Dendritic cell treated with granulocyte-macrophage colony-stimulating factor and Interleukin-4, amounts not matched to agents 40 ng/mL and 50 ng/mL, for 4 days (primary cell): ENCODE measurements at regions of chr20 and their contacts with region 1.

Region 1: GRCh38 chr20:32535953-32536823 is 48.9 kb downstream of the NOL4L start:
- H3K4me3 Mint-ChIP-seq: peak overlapping the region; percentile 76
- H3K27ac Mint-ChIP-seq: peak overlapping the region; percentile 75
- H3K4me1 Mint-ChIP-seq: peaks cover 64% of the 10 kb centered on the region
- H3K27me3 Mint-ChIP-seq: peaks cover 14% of the 10 kb centered on the region

Region 2: DNA sequence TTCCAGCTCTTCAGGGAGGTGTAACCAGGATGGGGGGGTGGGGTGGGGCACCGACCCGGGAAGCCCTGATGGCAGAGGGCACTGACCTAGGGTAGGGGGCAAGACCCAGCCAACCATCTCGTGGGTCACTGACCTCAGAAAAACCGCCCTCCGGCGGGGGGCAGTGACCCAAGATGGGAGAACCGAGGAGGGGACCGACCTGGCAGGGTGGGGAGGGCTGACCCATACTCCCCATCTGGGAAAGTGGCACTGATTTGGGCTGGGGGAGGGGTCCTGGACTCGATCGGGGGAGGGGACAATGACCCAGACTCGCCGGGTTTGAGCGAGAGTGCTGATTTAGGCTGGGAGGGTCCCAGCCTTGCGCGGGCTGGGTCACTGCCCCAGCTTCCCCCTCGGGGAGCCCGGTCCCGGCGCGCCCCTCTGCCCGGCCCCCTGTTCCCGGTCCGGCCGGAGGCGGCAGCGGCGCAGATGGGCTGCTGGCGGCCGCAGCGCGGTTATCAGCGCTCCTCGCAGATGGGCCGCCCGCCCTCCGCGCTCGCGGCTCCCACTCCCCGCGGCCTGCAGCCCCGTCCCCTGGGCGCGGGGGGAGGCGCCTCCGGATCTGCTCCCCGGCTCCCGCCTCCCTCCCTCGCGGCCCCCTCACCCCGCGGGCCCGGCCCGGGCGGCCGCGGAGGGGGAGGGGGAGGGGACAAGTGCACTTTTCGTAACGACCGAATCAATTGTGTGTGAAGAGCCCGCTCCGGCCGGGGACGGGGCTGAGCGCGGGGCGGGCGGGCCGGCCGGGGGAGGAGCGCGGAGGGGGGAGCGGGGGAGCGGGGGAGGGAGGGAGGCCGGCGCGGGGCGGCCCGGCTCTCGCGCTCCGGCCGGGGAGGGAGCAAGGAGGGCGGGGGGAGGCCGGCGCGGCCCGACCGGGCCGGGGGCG is 46.7 kb after region 1 on chr20:
- intact Hi-C with region 1: loop called (anchors 5 kb)
- H3K4me3 Mint-ChIP-seq: peak overlapping the region; percentile 64
- H3K27ac Mint-ChIP-seq: peak overlapping the region; percentile 76
- H3K4me1 Mint-ChIP-seq: peaks cover 51% of the 10 kb centered on the region
- H3K27me3 Mint-ChIP-seq: peaks cover 29% of the 10 kb centered on the region

Region 3: DNA sequence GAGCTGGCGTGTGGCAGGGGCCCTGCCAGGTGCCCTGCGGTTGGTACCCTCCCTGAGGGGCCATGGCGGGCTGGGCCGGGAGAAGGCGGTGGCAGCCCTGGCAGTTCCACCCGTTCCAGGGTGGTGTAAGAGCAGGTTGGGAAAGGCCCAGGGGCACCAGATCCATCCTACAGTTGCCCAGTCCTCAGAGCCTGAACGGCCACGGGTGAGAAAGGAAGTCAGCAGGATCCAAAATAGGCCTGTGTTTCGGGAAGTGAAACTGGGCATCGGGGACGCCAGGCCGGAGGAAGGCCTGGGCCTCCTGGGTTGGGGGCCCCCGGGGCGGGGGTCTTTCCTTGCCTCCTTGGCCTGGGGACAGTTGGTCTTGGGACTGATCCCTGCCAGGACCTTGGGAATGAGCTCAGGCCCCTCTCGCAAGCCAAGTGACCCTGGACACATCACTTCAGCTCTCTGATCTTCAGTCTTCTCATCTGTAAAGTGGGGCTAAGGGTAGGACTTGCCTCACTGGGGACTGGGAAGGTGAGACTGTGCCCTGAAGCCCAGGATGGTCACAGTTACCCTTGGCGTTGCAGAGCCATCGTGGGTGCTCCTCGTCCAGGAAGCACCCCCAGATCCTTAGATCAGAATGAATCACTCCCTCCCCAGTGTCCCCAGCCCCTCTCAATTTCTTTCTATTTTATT is 67.0 kb after region 1 on chr20:
- intact Hi-C with region 1: loop called (anchors 5 kb)
- H3K4me3 Mint-ChIP-seq: no peak overlapping the region
- H3K27ac Mint-ChIP-seq: peak overlapping the region; percentile 63
- H3K4me1 Mint-ChIP-seq: peaks cover 25% of the 10 kb centered on the region
- H3K27me3 Mint-ChIP-seq: peaks cover 5% of the 10 kb centered on the region